HEK293 (cell line): ENCODE measurements at regions of chr9 and their contacts with region 1.

Region 1: DNA sequence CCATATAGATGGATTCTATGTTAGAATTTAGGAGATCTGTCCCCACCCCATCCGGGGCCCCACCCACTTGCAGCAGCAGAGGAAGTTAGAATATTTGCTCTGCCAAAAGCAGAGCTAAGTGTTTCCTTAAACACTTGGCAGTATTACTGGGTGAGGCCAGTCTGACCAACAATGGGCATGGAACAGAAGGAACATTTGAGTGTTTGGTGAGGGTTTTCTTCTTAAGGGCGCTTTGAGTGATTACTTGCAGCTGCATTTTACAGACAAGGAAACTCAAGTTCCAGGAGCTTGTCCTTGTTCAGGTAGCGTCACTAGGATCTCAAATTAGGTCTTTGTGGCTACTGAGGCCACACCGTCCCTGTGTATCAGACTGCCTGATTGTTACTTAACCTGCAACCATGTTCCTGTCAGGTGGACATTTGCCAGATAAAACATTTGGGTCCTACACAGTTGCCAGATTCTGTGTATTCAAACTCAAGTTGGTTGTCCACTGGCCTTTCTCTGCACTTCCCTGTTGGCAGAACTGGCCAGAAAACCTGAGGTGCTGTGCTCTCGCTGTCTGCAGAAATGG is 59.3 kb downstream of the SLC46A2 start:
- H3K4me3 ChIP-seq: no peak overlapping the region
- H3K27ac ChIP-seq: no peak overlapping the region
- H3K4me1 ChIP-seq: no peaks in the 10 kb centered on the region
- CTCF ChIP-seq: no peak

Region 2: GRCh38 chr9:112819635-112820496 is 11.5 kb before region 1 on chr9:
- CTCF ChIA-PET with region 1: interaction called, 18 read pairs
- POLR2A ChIA-PET with region 1: no interaction called
- H3K4me3 ChIP-seq: no peak overlapping the region
- H3K27ac ChIP-seq: no peak overlapping the region
- H3K4me1 ChIP-seq: no peaks in the 10 kb centered on the region
- CTCF ChIP-seq: no peak

Region 3: DNA sequence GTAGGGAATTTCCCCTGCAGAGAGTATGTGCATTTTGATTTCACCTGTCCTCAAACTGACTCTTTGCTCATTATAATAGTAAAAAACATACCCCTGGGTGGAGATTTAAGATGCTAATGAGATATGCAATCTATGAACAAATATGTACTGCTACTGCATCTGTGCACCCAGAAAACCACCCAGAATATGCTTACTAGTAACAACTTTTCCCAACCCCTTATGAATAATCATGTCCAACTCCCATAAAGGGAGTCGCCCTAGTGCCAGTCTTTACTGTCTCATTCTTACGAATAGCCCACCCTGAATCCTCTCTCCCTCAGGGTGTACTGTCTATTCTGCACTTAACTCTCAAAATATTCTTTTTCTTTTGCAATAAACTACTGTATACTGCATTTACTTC is 264.2 kb after region 1 on chr9:
- CTCF ChIA-PET with region 1: no interaction called
- POLR2A ChIA-PET with region 1: no interaction called
- H3K4me3 ChIP-seq: no peak overlapping the region
- H3K27ac ChIP-seq: no peak overlapping the region
- H3K4me1 ChIP-seq: no peaks in the 10 kb centered on the region
- CTCF ChIP-seq: no peak